Prostate gland (tissue), 2 donors: ENCODE measurements at regions of chr6 and their contacts with region 1.

Region 1: GRCh38 chr6:116279260-116280063 is at the start of gene TSPYL1:
- DNase-seq: peak; percentile 98
- H3K4me3 ChIP-seq: peak within 1 kb of the TSS; percentile 82 to 91
- H3K27ac ChIP-seq: peak within 1 kb of the TSS; percentile 92 to 99
- H3K4me1 ChIP-seq: peaks cover 7% of the 10 kb centered on the region
- H3K27me3 ChIP-seq: no peaks in the 10 kb centered on the region
- CTCF ChIP-seq: no peak
- POLR2A ChIP-seq: peak; percentile 98
- total RNA-seq, gene TSPYL1: 112 to 159 TPM

Region 2: GRCh38 chr6:116511404-116512110 is 232.1 kb after region 1 on chr6 and contains the start of gene CALHM5:
- intact Hi-C with region 1: loop called (anchors 5 kb)
- DNase-seq: no peak
- H3K4me3 ChIP-seq: peak within 1 kb of the TSS; percentile 11 to 18
- H3K27ac ChIP-seq: peak within 1 kb of the TSS; percentile 51 to 67
- H3K4me1 ChIP-seq: no peaks in the 10 kb centered on the region
- H3K27me3 ChIP-seq: no peaks in the 10 kb centered on the region
- CTCF ChIP-seq: peak in 3 of 4 experiments; percentile 28 to 38 (median 36)
- POLR2A ChIP-seq: no peak
- total RNA-seq, gene CALHM5: 0.32 to 1.8 TPM

Region 3: GRCh38 chr6:116531675-116532570 is 252.5 kb after region 1 on chr6:
- intact Hi-C with region 1: loop called (anchors 10 kb)
- DNase-seq: peak; percentile 13
- H3K4me3 ChIP-seq: no peak overlapping the region
- H3K27ac ChIP-seq: no peak overlapping the region
- H3K4me1 ChIP-seq: no peaks in the 10 kb centered on the region
- H3K27me3 ChIP-seq: no peaks in the 10 kb centered on the region
- CTCF ChIP-seq: peak; percentile 31 to 65 (median 52)
- POLR2A ChIP-seq: no peak

Region 4: DNA sequence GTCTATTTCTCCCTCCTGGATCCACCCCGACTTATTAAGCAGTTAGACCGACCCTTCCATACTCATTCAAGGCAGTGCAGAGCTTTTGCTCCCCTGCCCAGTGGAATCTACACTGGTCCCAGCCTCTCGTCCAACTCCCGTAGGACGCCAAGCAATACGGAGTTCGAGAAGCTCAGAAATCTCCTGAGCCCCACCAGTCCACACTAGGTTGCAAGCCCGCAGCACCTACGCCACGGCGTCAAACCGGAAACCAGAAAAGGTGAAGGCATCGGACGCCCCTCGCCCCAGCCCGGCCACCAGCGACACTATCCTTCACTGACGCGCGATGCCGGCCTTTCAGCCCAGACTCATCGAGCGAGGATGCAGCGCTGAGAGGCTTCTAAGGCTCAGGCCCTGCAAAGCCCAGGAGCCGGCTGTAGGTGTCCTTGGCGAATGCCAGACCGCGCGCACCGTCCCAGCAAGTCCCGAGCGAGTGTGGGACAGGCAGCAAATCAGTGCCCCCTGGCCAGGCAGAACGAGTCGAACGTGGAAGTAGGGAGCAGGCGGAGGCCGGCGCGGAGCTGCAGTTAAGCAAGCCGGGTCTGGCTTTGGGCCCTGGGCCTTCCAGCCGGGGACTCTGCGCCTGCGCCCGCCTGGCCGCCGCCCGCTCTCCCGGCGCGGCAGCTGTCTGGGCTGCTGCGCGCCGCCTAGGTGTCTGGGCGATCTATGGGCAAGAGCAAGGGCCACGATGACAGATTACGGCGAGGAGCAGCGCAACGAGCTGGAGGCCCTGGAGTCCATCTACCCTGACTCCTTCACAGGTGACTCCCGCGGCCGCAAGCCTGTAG is 291.6 kb after region 1 on chr6 and contains the start of gene RWDD1:
- intact Hi-C with region 1: loop called (anchors 5 kb)
- DNase-seq: peak; percentile 98
- H3K4me3 ChIP-seq: peak within 1 kb of the TSS; percentile 56 to 70
- H3K27ac ChIP-seq: peak within 1 kb of the TSS; percentile 74 to 77
- H3K4me1 ChIP-seq: peaks cover 6% of the 10 kb centered on the region
- H3K27me3 ChIP-seq: no peaks in the 10 kb centered on the region
- CTCF ChIP-seq: peak in 1 of 4 experiments; percentile 43
- POLR2A ChIP-seq: peak; percentile 51
- total RNA-seq, gene RWDD1: 26.7 to 40.3 TPM

Region 5: GRCh38 chr6:116680975-116681808 is 401.7 kb after region 1 on chr6 and contains the start of gene KPNA5:
- intact Hi-C with region 1: loop called (anchors 10 kb)
- DNase-seq: peak; percentile 88
- H3K4me3 ChIP-seq: peak within 1 kb of the TSS; percentile 66 to 67
- H3K27ac ChIP-seq: peak within 1 kb of the TSS; percentile 90 to 95
- H3K4me1 ChIP-seq: peaks cover 3% of the 10 kb centered on the region
- H3K27me3 ChIP-seq: no peaks in the 10 kb centered on the region
- CTCF ChIP-seq: peak in 2 of 4 experiments; percentile 16 to 27
- POLR2A ChIP-seq: peak; percentile 81
- total RNA-seq, gene KPNA5: 14.4 to 22.3 TPM